ENCODE measurements at regions of chr11 and their contacts with region 1.

Region 1: DNA sequence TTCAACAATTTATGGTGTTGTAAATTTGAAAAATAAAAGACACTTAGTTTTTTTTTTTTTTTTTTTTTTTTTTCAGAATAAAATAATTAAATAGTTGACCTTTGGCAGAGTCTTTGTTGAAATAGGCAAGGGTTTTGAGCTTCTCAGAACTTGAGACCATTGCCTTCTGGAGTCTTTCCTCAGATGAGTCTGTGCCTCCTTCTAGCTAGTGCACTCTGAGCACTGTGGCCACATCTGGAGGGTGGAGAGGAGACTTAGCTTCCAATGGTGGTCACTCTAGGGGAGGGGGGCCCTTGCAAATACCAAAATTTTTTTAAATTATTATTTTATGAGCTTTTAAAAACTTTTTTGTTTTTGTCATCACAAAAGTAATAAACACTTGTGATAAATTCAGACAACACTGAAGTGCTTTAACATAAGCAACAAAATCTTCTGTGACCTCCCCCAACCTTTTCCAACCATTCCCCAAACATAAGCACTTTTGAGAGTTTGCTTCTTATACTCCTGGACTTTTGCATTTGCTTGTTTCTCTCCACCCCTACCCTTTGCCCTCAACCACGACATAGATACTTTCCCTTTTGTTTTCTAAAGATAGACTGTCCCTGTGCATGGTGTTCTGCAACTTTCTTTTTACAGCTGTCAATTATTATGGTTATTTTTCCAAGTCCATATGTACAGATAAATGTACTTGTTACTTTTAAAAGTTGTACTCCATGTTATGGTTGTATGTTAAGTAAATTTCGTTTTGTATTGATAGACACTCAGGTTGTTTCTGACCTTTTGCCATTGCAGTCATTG is 41.1 kb downstream of the BMAL1 start:
- DNase-seq: no peak
- ATAC-seq: no peak
- H3K4me3 ChIP-seq: no peak overlapping the region
- H3K27ac ChIP-seq: no peak overlapping the region
- H3K4me1 ChIP-seq: no peaks in the 10 kb centered on the region
- H3K27me3 ChIP-seq: no peaks in the 10 kb centered on the region
- CTCF ChIP-seq: no peak

Region 2: DNA sequence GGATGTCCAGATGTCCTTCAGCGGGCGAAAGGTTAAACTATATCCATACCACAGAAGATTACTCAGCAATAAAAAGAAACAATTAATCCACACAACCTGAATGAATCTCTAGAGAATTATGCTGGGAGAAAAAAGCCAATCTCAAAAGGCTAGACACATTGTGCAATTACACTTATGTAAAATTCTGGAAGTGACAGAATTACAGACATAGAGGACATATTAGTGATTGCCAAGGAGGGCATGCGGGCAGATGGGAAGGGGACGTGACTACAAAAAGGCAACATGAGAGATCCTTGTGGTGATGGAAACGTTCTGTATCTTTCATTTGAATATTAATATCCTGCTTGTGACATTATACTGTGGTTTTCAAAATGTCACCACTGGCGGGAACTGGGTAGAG is 144.6 kb before region 1 on chr11:
- CTCF ChIA-PET with region 1: interaction called, 15 read pairs
- POLR2A ChIA-PET with region 1: no interaction called
- in situ Hi-C with region 1: no loop called
- intact Hi-C with region 1: no loop called
- DNase-seq: no peak
- ATAC-seq: no peak
- H3K4me3 ChIP-seq: no peak overlapping the region
- H3K27ac ChIP-seq: no peak overlapping the region
- H3K4me1 ChIP-seq: no peaks in the 10 kb centered on the region
- H3K27me3 ChIP-seq: peaks cover 22% of the 10 kb centered on the region
- CTCF ChIP-seq: no peak

Region 3: GRCh38 chr11:13434247-13435205 is 115.8 kb after region 1 on chr11:
- CTCF ChIA-PET with region 1: no interaction called
- POLR2A ChIA-PET with region 1: no interaction called
- in situ Hi-C with region 1: no loop called
- intact Hi-C with region 1: no loop called
- DNase-seq: no peak
- ATAC-seq: no peak
- H3K4me3 ChIP-seq: no peak overlapping the region
- H3K27ac ChIP-seq: no peak overlapping the region
- H3K4me1 ChIP-seq: no peaks in the 10 kb centered on the region
- H3K27me3 ChIP-seq: no peaks in the 10 kb centered on the region
- CTCF ChIP-seq: no peak

Measured in Panc1 (cell line).